Heart right ventricle (tissue), 16 donors: ENCODE measurements at regions of chr2 and their contacts with region 1.

Region 1: GRCh38 chr2:33475224-33476130 is 972 bp upstream of the RASGRP3 start:
- DNase-seq: peak; percentile 52 to 81
- ATAC-seq: peak; percentile 43 to 78 (median 66)
- H3K4me3 ChIP-seq: peak overlapping the region; percentile 32 to 68 (median 60)
- H3K27ac ChIP-seq: peak overlapping the region; percentile 68 to 94 (median 90)
- H3K4me1 ChIP-seq: peaks cover 0 to 72% (median 50%) of the 10 kb centered on the region in 9 donors
- H3K27me3 ChIP-seq: no peaks in the 10 kb centered on the region
- CTCF ChIP-seq: peak; percentile 53 to 88 (median 73)

Region 2: DNA sequence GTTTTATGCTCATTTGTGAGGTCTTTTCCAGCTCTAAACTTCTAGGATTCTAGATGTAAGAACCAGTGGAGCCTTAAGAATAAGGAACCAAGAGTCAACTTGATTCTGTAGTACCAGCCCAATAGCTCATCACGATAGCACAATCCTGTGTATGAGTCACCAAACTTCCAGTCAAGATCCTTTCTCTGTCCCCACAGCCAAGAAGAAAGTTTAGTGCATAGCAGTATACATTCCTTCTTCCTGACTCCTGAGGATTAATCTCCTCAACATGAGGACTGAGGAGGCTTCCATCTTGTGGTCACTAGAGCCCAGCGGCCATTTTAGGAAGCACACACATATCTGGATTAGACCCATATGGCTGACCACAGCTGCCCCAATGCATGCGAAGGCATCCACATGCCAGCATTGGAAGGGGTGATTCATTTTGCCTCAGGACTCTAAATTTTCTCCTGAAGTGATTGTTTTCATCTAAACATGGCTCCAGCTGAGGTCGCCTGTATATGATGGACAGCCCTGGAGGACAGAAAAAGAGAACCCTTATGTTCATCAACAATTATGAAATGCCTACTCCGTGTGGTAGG is 54.4 kb after region 1 on chr2:
- intact Hi-C with region 1: loop called in 3 of 10 experiments (anchors 10 kb)
- DNase-seq: no peak
- ATAC-seq: peak in 1 of 8 donors; percentile 18
- H3K4me3 ChIP-seq: no peak overlapping the region
- H3K27ac ChIP-seq: no peak overlapping the region
- H3K4me1 ChIP-seq: peaks cover 0 to 34% (median 20%) of the 10 kb centered on the region in 9 donors
- H3K27me3 ChIP-seq: no peaks in the 10 kb centered on the region
- CTCF ChIP-seq: no peak

Region 3: DNA sequence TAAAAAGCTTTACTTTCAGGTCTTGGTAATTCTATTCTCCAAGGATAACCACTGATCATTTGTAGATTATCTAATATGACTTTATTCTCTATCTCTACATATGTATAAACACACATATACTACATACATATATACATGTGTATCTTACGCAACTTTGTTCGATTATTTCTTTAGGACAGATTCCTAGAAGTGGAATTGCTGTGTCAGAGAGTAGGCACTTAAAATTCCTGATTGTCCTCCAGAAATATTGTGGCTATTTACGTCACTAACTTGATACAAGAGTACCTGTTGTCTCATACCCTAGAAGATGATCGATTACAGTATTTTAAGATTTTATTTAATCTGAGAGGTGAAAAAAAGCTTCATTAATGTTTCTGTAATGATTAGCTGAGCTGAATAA is 65.8 kb after region 1 on chr2:
- intact Hi-C with region 1: loop called in 6 of 10 experiments (anchors 5 to 10 kb)
- DNase-seq: no peak
- ATAC-seq: peak in 2 of 8 donors; percentile 67 to 71
- H3K4me3 ChIP-seq: no peak overlapping the region
- H3K27ac ChIP-seq: peak overlapping the region in 4 of 10 donors; percentile 19 to 77 (median 49)
- H3K4me1 ChIP-seq: peaks cover 0 to 20% (median 5%) of the 10 kb centered on the region in 9 donors
- H3K27me3 ChIP-seq: no peaks in the 10 kb centered on the region
- CTCF ChIP-seq: no peak

Region 4: DNA sequence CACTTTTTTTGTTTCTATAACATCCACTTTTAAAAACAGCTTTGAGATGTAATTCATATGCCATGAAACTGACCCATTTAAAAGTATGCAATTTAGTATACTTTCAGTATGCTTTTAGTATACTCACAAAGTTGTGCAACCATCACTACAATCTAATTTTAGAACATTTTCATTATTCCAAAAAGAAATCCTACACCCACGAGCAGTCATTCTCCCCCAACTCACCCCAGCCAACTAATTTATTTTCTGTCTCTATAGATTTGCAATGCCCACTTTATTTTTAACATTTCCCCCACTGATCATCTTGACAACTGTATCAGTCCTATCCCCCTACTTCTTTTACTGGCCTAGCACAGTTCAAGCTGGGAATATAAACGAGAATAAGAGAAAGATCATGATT is 84.5 kb after region 1 on chr2:
- intact Hi-C with region 1: loop called in 1 of 10 experiments (anchors 10 kb)
- DNase-seq: no peak
- ATAC-seq: no peak
- H3K4me3 ChIP-seq: no peak overlapping the region
- H3K27ac ChIP-seq: no peak overlapping the region
- H3K4me1 ChIP-seq: peaks cover 0 to 19% (median 12%) of the 10 kb centered on the region in 9 donors
- H3K27me3 ChIP-seq: no peaks in the 10 kb centered on the region
- CTCF ChIP-seq: no peak

Region 5: GRCh38 chr2:33583194-33583938 is 107.9 kb after region 1 on chr2:
- intact Hi-C with region 1: loop called in 7 of 10 experiments (anchors 5 to 10 kb)
- DNase-seq: peak in 1 of 2 donors; percentile 27
- ATAC-seq: peak in 4 of 8 donors; percentile 41 to 67 (median 50)
- H3K4me3 ChIP-seq: no peak overlapping the region
- H3K27ac ChIP-seq: peak overlapping the region in 2 of 10 donors; percentile 3 to 32
- H3K4me1 ChIP-seq: peaks cover 0 to 27% (median 13%) of the 10 kb centered on the region in 9 donors
- H3K27me3 ChIP-seq: no peaks in the 10 kb centered on the region
- CTCF ChIP-seq: peak; percentile 73 to 89 (median 81)